CD4-positive, alpha-beta memory T cell (primary cell): ENCODE measurements at regions of chr5 and their contacts with region 1.

Region 1: GRCh38 chr5:912280-913091 is 19.8 kb downstream of the TRIP13 start:
- DNase-seq: peak; percentile 75 to 94 (median 87)
- H3K4me3 ChIP-seq: no peak overlapping the region
- H3K4me3 Mint-ChIP-seq: peak overlapping the region in 6 of 8 donors; percentile 9 to 76 (median 72)
- H3K27ac ChIP-seq: peak overlapping the region; percentile 57
- H3K27ac Mint-ChIP-seq: peak overlapping the region; percentile 77 to 99 (median 96)
- H3K4me1 ChIP-seq: no peaks in the 10 kb centered on the region
- H3K4me1 Mint-ChIP-seq: peaks cover 2 to 12% (median 9%) of the 10 kb centered on the region in 4 donors
- H3K27me3 ChIP-seq: no peaks in the 10 kb centered on the region
- H3K27me3 Mint-ChIP-seq: no peaks in the 10 kb centered on the region

Region 2: GRCh38 chr5:543825-544674 is 368.4 kb before region 1 on chr5:
- CTCF ChIA-PET with region 1: no interaction called
- POLR2A ChIA-PET with region 1: no interaction called
- intact Hi-C with region 1: no loop called
- DNase-seq: peak in 4 of 5 donors; percentile 26 to 41 (median 29)
- H3K4me3 ChIP-seq: peak overlapping the region; percentile 12 to 51
- H3K4me3 Mint-ChIP-seq: peak overlapping the region; percentile 45 to 84 (median 76)
- H3K27ac ChIP-seq: peak overlapping the region; percentile 14
- H3K27ac Mint-ChIP-seq: peak overlapping the region in 5 of 7 donors; percentile 66 to 88 (median 86)
- H3K4me1 ChIP-seq: peaks cover 16% of the 10 kb centered on the region
- H3K4me1 Mint-ChIP-seq: peaks cover 5 to 13% (median 8%) of the 10 kb centered on the region in 4 donors
- H3K27me3 ChIP-seq: peaks cover 4% of the 10 kb centered on the region
- H3K27me3 Mint-ChIP-seq: peaks cover 6 to 8% of the 10 kb centered on the region in 2 donors

Region 3: DNA sequence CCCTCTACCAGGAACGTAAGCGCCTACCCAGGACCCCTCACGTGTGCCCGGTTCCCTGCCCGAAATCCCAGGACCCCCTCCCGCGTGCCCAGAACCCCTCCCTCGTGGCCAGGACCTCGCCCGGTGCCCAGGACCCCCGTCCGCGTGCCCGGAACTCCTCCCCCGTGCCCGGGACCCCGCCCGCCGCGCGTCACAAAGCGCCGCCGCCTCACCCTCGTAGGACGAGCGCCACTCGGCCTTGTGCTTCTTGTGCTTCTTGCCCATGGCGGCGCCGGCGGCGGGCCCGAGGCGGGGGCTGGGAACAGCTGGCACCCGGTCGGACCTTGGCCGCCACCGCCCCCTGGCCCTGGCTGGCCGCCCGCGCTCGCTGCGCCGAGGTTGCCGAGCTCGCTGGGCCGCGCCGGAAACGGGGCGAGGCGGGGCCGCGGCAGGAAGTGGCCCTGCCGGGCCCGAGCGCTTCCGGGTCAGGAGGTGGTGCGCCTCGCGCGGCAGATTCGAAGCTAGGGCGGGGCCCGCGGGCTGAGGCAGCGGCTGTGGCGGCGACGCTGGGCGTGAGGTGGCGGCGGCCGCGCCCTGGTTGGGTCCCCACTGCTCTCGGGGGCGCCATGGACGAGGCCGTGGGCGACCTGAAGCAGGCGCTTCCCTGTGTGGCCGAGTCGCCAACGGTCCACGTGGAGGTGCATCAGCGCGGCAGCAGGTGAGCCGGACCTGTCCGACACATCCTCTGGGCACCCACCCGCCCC is 19.9 kb before region 1 on chr5 and contains the starts of genes BRD9 and TRIP13:
- CTCF ChIA-PET with region 1: no interaction called
- POLR2A ChIA-PET with region 1: no interaction called
- intact Hi-C with region 1: loop called (anchors 2 kb)
- DNase-seq: peak; percentile 81 to 89 (median 88)
- H3K4me3 ChIP-seq: peak within 1 kb of the TSS; percentile 38 to 83
- H3K4me3 Mint-ChIP-seq: peak within 1 kb of the TSS; percentile 85 to 90 (median 87)
- H3K27ac ChIP-seq: peak within 1 kb of the TSS; percentile 90
- H3K27ac Mint-ChIP-seq: peak within 1 kb of the TSS; percentile 86 to 95 (median 91)
- H3K4me1 ChIP-seq: peaks cover 28% of the 10 kb centered on the region
- H3K4me1 Mint-ChIP-seq: peaks cover 7 to 40% (median 23%) of the 10 kb centered on the region in 4 donors
- H3K27me3 ChIP-seq: no peaks in the 10 kb centered on the region
- H3K27me3 Mint-ChIP-seq: no peaks in the 10 kb centered on the region
- total RNA-seq, gene BRD9: 81.5 to 86.8 TPM
- total RNA-seq, gene TRIP13: 0.69 to 1.0 TPM

Region 4: DNA sequence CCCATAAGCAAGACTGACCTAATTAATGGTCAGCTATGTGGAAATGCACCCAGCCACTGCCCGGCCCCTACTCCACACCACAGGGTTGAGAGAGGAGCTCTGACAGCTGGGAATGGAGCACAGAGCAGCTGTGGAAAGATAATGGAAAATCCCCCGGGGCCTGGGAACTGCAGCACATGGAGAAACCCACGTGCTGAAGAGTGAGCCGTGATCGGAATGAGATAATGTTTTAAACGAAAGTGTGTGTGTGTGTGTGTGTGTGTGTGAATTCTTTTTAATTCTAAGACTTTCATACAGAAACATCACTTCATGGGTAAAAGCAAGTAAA is 212.5 kb after region 1 on chr5:
- CTCF ChIA-PET with region 1: no interaction called
- POLR2A ChIA-PET with region 1: no interaction called
- intact Hi-C with region 1: no loop called
- DNase-seq: no peak
- H3K4me3 ChIP-seq: no peak overlapping the region
- H3K4me3 Mint-ChIP-seq: no peak overlapping the region
- H3K27ac ChIP-seq: no peak overlapping the region
- H3K27ac Mint-ChIP-seq: no peak overlapping the region
- H3K4me1 ChIP-seq: no peaks in the 10 kb centered on the region
- H3K4me1 Mint-ChIP-seq: no peaks in the 10 kb centered on the region
- H3K27me3 ChIP-seq: no peaks in the 10 kb centered on the region
- H3K27me3 Mint-ChIP-seq: peaks cover 6 to 8% of the 10 kb centered on the region in 2 donors